ENCODE measurements at regions of chr9 and their contacts with region 1.

Region 1: DNA sequence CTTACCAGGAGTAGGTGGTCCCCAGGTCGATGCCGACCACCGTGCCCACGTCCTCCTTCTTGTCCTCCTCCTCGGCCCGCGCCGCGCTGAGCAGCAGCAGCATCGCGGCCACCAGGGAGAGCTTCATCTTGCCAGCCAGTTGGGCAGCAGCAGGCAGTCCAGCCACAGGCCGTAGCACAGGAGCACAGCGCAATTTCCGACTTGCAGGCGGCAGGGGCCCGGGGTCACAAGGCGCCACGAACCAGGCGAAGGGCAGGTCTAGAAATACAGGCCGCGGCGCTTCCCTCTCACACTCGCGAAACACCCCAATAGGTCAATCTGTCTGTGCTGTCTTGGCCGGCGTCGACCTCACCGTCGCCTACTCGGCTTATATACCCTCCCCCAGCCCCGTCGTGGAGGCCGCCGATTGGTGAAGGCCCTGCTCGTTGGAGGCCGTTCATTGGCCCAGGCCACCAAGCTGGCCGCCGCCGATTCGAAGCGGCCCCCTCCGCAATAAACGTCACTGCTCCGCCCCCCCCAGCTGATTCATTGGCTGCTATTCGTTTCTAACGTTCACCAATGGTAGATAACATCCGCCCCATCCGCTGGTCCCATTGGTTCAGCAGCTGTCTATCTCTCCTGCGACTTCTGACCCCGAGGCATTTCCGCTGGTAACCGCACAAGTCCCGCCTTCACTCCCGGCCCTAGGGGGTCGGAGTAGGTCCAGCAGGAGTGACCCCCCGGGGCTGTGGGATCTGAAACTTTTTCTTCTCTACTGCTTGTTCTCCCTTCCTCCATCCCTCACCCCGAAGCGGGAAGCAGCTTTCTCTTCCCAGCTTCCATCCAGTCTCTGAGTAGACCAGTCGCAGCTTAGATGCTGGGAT is at the start of gene HSPA5:
- DNase-seq: peak; percentile 97

Region 2: DNA sequence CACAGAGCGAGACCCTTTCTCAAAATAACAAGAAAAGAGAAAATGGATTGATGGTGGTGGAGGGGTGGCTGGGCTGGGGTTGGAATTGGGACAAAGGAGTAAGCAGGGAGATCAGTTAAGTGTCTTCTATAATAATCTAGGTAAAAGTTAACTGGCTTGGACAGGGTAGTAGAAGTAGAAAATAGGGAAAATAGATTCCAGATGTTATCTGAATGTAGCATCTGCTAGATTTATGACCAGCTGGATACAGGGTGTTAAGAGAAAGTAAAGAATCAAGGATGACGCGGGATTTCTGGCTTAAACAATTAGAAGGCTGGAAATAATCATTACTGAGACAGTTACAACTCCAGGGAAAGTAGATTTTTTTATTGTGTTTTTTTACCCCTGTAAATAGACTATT is 64.6 kb before region 1 on chr9:
- CTCF ChIA-PET with region 1: no interaction called
- POLR2A ChIA-PET with region 1: interaction called, 10 read pairs
- DNase-seq: no peak

Region 3: GRCh38 chr9:125200210-125201047 is 40.8 kb before region 1 on chr9 and contains the start of gene RABEPK:
- CTCF ChIA-PET with region 1: no interaction called
- POLR2A ChIA-PET with region 1: interaction called, 19 read pairs
- DNase-seq: peak; percentile 97

Region 4: GRCh38 chr9:125255781-125256391 is 14.7 kb after region 1 on chr9:
- CTCF ChIA-PET with region 1: interaction called, 4 read pairs
- POLR2A ChIA-PET with region 1: interaction called, 33 read pairs
- DNase-seq: peak; percentile 42

Region 5: GRCh38 chr9:125261501-125262293 is 20.5 kb after region 1 on chr9 and contains the start of gene GAPVD1:
- CTCF ChIA-PET with region 1: interaction called, 4 read pairs
- POLR2A ChIA-PET with region 1: interaction called, 33 read pairs
- DNase-seq: peak; percentile 99

Region 6: DNA sequence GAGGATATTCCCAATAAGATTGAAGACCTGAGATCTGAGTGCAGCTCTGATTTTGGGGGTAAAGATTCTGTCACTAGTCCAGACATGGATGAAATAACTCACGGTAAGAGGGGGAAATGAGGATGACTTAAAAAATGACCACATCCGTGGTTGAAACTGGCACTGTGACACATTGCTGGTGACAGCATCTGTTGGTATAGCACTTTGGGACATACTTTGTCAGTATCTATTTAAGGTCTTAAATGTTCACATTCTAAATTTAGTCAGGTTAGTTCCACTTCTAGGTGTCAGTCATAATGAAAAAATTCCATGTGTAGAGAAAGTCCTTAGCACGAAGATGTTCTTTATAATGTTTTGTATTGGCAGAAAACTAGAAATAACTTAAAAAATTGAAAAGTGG is 91.3 kb after region 1 on chr9:
- CTCF ChIA-PET with region 1: no interaction called
- POLR2A ChIA-PET with region 1: no interaction called
- DNase-seq: no peak

Measured in HEK293T (cell line).